Right ventricle myocardium inferior (tissue), 1 donor: ENCODE measurements at regions of chr6 and their contacts with region 1.

Region 1: DNA sequence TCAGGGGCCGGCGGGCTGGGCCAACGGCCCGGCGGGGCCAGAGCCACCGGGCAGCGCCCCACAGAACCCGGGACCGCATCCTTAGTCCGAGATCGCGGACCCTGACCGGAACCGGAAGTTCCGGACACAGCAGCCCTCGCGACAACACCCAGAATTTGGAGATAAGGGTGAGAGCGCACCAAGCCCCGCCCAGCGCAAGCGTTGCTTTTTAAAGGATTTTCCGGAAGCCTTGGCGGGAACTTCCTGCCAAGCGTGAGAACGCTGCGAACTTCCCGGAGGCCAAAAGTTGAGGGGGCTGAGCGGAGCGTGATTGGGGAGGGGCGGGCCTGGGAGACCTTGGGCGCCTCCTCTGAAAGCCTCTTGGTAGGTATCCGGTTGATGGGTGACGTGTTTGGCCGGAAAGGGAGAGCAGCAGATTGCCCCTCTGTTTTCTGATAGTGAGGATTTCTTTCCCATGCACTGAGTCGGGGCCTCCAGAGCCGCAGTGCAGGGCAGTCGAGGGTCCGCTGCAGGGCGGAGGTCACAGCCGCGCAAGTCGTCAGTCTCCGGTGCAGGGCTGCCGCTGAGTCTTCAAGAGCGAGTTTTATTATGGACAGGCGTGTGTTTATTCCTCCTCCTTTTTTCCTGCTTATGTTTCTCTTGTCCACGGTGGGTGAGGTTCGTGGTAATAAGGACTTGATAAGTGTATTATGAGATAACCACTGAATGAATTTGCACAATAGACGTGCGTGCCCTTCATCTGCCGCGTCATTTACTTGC is at the start of gene MTRF1L:
- DNase-seq: peak; percentile 97
- ATAC-seq: peak; percentile 100
- total RNA-seq, gene MTRF1L: 30.8 TPM

Region 2: GRCh38 chr6:152695372-152696045 is 307.3 kb before region 1 on chr6:
- intact Hi-C with region 1: no loop called
- DNase-seq: no peak
- ATAC-seq: no peak

Region 3: DNA sequence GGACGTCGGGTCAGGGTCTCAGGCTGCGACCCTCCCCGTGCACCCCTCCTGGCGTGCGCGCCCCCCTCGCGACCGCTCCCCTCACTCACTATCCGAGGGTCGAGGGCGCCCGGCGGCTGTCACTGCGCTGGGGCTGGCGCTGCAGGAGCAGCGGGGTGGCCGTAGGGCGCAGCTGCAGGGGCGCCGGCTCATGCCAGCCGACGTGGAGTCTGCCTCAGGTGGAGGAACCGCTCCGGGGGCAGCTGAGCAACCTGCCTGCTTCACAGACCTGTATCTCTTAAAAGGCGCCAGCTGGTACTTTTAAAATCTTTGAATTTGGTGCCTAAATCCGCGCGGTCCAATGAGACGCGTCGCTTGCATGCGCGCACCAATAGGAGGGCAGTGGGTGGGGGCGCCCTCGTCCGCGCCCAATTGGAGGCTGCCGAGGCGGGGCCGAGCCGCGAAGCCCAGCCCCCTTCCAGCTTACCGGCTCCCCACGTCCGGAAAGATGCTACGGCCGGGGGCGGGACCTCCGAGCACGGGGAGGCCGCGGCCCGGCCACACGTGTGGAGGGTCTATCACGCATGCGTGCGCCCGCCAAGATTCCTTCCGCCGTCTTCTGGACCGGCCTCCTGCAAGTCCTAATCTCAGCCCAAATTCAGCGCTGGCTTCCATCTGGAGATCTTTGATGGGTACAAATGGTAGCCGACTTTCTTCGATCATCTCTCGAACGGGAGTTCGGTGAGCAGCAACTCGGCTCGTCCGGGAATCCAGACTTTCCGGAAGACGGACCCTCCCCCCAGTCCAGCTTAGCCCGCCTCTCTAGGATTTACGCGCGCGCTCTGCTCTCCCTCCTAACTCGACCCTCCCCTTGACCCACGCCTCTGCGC is 19.8 kb before region 1 on chr6 and contains the start of gene FBXO5:
- intact Hi-C with region 1: loop called (anchors 2 kb)
- DNase-seq: peak; percentile 99
- ATAC-seq: peak; percentile 98
- total RNA-seq, gene FBXO5: 2.4 TPM